ENCODE measurements at regions of chr12 and their contacts with region 1.

Region 1: GRCh38 chr12:6195665-6196535 is 4.3 kb upstream of the CD9 start:
- DNase-seq: peak; percentile 42 to 80 (median 64)
- ATAC-seq: peak; percentile 75
- H3K4me3 ChIP-seq: no peak overlapping the region
- H3K4me3 Mint-ChIP-seq: no peak overlapping the region
- H3K27ac ChIP-seq: no peak overlapping the region
- H3K27ac Mint-ChIP-seq: peak overlapping the region in 3 of 9 donors; percentile 16 to 50 (median 19)
- H3K4me1 ChIP-seq: no peaks in the 10 kb centered on the region
- H3K4me1 Mint-ChIP-seq: peaks cover 5 to 21% (median 9%) of the 10 kb centered on the region in 7 donors
- H3K27me3 ChIP-seq: peaks cover 0 to 3% of the 10 kb centered on the region in 2 donors
- H3K27me3 Mint-ChIP-seq: peaks cover 0 to 37% (median under 1%) of the 10 kb centered on the region in 5 donors

Region 2: DNA sequence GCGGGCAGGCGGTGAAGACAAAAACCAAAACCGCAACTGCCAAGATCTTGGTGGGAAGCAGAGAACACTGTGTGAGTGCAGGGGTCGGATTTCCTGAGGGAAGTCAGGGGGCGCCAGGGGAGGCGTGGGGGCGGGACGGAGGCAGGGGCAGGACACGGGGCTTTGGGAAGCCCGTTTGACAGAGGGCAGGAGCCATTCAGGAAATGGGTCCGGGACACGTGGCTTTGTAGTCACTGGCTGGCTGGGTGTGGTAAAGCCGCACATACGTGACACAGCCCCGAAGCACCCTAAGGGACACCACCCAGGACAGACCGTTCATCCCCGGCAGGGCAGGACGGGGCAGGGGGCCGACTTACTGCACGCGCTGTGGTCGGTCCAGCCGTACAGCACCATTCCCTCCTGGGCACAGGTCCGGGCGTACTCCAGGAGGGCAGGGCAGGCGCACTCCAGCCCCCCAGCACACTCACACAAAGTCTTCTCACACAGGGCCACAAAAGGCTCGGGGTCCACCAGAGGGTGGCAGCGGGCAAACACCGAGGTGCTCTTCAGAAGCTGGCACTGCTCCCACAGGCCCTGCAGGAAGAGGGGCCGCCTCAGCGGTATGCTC is 120.8 kb before region 1 on chr12:
- CTCF ChIA-PET with region 1: interaction called, 10 read pairs
- POLR2A ChIA-PET with region 1: interaction called, 3 read pairs
- intact Hi-C with region 1: loop called in 1 of 2 experiments (anchors 1 kb)
- DNase-seq: peak in 6 of 9 donors; percentile 30 to 48 (median 40)
- ATAC-seq: peak; percentile 84
- H3K4me3 ChIP-seq: peak overlapping the region; percentile 32
- H3K4me3 Mint-ChIP-seq: peak overlapping the region; percentile 83 to 94 (median 89)
- H3K27ac ChIP-seq: no peak overlapping the region
- H3K27ac Mint-ChIP-seq: peak overlapping the region in 7 of 9 donors; percentile 32 to 94 (median 52)
- H3K4me1 ChIP-seq: peaks cover 9 to 18% of the 10 kb centered on the region in 2 donors
- H3K4me1 Mint-ChIP-seq: peaks cover 23 to 29% (median 27%) of the 10 kb centered on the region in 7 donors
- H3K27me3 ChIP-seq: no peaks in the 10 kb centered on the region
- H3K27me3 Mint-ChIP-seq: peaks cover 0 to 30% (median 5%) of the 10 kb centered on the region in 5 donors

Region 3: GRCh38 chr12:6167327-6168259 is 28.3 kb before region 1 on chr12:
- CTCF ChIA-PET with region 1: interaction called, 3 read pairs
- POLR2A ChIA-PET with region 1: no interaction called
- intact Hi-C with region 1: loop called in 1 of 2 experiments (anchors 2 kb)
- DNase-seq: peak in 3 of 9 donors; percentile 10 to 76 (median 25)
- ATAC-seq: peak; percentile 86
- H3K4me3 ChIP-seq: no peak overlapping the region
- H3K4me3 Mint-ChIP-seq: peak overlapping the region; percentile 35 to 75 (median 62)
- H3K27ac ChIP-seq: no peak overlapping the region
- H3K27ac Mint-ChIP-seq: peak overlapping the region in 8 of 9 donors; percentile 10 to 85 (median 56)
- H3K4me1 ChIP-seq: peaks cover 0 to 25% of the 10 kb centered on the region in 2 donors
- H3K4me1 Mint-ChIP-seq: peaks cover 22 to 48% (median 33%) of the 10 kb centered on the region in 7 donors
- H3K27me3 ChIP-seq: no peaks in the 10 kb centered on the region
- H3K27me3 Mint-ChIP-seq: peaks cover 0 to 6% (median 0%) of the 10 kb centered on the region in 5 donors

Region 4: DNA sequence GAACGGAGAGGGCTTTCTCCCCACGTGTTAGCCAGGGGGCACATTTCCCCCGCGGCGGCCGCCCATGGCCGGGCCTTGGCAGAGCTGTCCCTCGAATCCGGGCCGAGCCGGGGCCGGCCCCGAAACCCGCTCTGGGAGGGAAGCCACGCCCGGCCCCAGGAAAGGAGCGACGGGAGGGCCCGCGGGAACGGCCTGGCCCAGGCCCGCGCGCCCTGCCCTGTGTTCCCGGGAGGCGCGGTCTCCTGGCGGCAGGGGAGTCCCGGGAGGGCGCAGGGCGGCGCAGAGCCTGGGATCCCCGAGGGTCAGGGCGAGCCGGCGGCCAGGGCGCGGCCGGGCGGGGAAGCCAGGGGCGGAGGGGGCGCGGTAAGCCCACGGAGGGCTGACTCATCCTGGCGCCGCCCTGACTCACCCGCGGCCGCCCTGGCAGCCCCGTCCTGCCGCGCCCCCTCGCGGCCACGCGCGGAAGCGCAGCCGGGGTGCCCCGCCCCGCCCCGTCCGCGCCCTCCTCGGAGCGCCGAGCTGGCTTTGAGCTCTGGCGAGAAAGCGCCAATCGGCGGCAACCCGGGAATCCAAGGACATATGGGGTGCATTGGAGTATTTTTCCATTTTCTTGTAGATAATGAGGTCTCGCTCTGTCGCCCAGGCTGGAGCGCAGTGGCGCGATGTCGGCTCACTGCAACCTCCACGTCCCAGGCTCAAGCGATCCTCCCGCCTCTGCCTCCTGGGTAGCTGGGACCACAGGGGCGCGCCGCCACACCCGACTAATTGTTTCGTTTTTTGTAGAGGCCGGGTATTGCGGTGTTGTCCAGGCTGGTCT is 82.7 kb after region 1 on chr12:
- CTCF ChIA-PET with region 1: interaction called, 15 read pairs
- POLR2A ChIA-PET with region 1: no interaction called
- intact Hi-C with region 1: loop called (anchors 1 kb)
- DNase-seq: peak; percentile 66 to 96 (median 83)
- ATAC-seq: peak; percentile 99
- H3K4me3 ChIP-seq: peak overlapping the region; percentile 23
- H3K4me3 Mint-ChIP-seq: peak overlapping the region; percentile 17 to 82 (median 71)
- H3K27ac ChIP-seq: no peak overlapping the region
- H3K27ac Mint-ChIP-seq: peak overlapping the region in 2 of 9 donors; percentile 22 to 72
- H3K4me1 ChIP-seq: peaks cover 0 to 3% of the 10 kb centered on the region in 2 donors
- H3K4me1 Mint-ChIP-seq: peaks cover 0 to 11% (median 6%) of the 10 kb centered on the region in 7 donors
- H3K27me3 ChIP-seq: peaks cover 0 to 3% of the 10 kb centered on the region in 2 donors
- H3K27me3 Mint-ChIP-seq: peaks cover 5 to 33% (median 19%) of the 10 kb centered on the region in 5 donors

Region 5: GRCh38 chr12:6312529-6313325 is 116.8 kb after region 1 on chr12:
- CTCF ChIA-PET with region 1: no interaction called
- POLR2A ChIA-PET with region 1: no interaction called
- intact Hi-C with region 1: no loop called
- DNase-seq: peak in 1 of 9 donors; percentile 38
- ATAC-seq: peak; percentile 33
- H3K4me3 ChIP-seq: no peak overlapping the region
- H3K4me3 Mint-ChIP-seq: no peak overlapping the region
- H3K27ac ChIP-seq: no peak overlapping the region
- H3K27ac Mint-ChIP-seq: no peak overlapping the region
- H3K4me1 ChIP-seq: peaks cover 0 to 3% of the 10 kb centered on the region in 2 donors
- H3K4me1 Mint-ChIP-seq: peaks cover 3 to 9% (median 3%) of the 10 kb centered on the region in 7 donors
- H3K27me3 ChIP-seq: peaks cover 0 to 7% of the 10 kb centered on the region in 2 donors
- H3K27me3 Mint-ChIP-seq: peaks cover 6 to 31% (median 8%) of the 10 kb centered on the region in 5 donors